Mammary epithelial cell (primary cell): ENCODE measurements at regions of chr12 and their contacts with region 1.

Region 1: DNA sequence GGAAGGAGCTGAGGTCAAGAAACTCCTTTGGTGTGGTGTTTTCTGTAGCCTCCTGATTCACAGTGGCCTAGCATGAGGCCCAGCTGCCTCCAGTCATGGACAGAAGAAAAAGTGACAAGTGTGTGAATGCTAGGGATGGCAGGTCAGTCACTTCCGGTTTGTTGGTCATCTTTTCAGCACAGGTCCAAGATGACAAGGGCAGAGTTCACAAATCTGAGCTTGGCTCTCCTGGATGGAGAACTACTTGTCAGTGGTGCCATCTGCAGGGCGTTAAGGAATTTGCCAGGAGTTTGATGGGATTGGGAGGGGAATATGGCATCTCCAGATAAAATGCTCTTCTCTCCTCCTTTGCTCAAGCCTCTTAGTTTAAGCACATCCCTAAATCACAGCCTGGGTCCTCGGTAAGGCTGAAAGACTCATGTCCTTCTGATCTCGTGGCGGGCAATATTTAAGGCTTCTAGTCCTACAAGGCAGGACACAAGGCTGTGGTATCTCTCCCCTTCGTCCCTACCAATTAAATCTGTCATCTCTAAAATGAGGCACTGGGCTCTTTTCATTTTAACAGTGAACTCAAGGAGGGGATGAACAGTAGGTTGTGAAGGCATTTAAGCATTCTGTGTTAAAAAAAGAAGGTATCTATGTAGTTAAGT is 10.0 kb downstream of the TUBA1B start:
- DNase-seq: peak; percentile 41
- H3K4me3 ChIP-seq: no peak overlapping the region
- H3K27ac ChIP-seq: no peak overlapping the region
- H3K4me1 ChIP-seq: no peaks in the 10 kb centered on the region
- H3K27me3 ChIP-seq: no peaks in the 10 kb centered on the region
- CTCF ChIP-seq: peak; percentile 75 to 78

Region 2: DNA sequence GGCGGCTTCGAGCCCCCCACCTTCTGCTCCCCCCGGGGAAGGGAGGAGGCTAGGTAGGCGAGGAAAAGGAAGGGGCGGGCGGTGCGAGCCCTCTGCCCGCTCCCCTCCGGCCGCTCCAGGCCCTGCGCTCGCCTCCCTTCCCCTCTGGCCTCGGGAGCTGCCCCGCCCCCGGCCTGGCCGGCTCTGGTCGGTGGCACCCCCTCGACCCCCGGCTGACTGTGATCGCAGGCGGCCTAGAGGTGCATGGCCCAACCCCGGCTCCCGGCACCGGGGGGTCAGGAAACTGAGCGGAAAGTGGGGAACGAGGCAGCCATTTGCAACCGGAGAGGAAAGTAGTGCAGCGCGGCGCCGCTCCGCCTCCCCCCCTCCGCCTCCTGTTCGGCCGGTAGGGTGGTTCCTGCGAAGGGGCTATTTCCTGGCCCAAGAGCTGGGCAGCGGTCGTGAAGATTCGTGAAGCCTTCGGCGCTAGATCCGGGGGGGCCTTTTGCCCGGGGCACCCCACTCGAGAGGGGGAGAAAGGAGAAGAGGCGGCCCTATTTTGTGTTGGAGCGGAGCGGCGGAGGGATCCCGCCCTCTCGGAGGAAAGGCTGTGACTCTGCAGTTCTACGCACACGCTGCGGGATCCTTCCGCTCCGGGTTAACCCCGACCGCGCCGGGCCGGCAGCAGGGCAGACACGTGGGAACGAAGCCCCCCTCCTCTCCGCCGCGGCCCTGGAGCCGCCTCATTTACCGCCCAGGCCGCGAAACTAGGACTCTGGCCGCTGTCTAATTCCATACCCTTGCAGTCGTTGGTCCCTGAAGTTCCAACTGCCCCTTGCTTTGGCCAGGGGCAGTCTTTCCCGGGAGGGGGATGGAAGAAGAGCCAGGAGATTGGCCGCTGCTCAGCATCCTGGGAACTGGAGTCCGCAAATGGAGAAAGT is 60.7 kb before region 1 on chr12 and contains the start of gene KMT2D:
- CTCF ChIA-PET with region 1: interaction called, 11 read pairs
- dilution Hi-C with region 1: loop called (anchors 5 kb)
- in situ Hi-C with region 1: loop called (anchors 5 kb)
- intact Hi-C with region 1: loop called (anchors 1 kb)
- DNase-seq: peak; percentile 93
- H3K4me3 ChIP-seq: peak within 1 kb of the TSS; percentile 87 to 93 (median 89)
- H3K27ac ChIP-seq: peak within 1 kb of the TSS; percentile 82
- H3K4me1 ChIP-seq: peaks cover 24% of the 10 kb centered on the region
- H3K27me3 ChIP-seq: no peaks in the 10 kb centered on the region
- CTCF ChIP-seq: peak in 1 of 2 donors; percentile 30
- total RNA-seq, gene KMT2D: 30.7 to 78.0 TPM

Region 3: DNA sequence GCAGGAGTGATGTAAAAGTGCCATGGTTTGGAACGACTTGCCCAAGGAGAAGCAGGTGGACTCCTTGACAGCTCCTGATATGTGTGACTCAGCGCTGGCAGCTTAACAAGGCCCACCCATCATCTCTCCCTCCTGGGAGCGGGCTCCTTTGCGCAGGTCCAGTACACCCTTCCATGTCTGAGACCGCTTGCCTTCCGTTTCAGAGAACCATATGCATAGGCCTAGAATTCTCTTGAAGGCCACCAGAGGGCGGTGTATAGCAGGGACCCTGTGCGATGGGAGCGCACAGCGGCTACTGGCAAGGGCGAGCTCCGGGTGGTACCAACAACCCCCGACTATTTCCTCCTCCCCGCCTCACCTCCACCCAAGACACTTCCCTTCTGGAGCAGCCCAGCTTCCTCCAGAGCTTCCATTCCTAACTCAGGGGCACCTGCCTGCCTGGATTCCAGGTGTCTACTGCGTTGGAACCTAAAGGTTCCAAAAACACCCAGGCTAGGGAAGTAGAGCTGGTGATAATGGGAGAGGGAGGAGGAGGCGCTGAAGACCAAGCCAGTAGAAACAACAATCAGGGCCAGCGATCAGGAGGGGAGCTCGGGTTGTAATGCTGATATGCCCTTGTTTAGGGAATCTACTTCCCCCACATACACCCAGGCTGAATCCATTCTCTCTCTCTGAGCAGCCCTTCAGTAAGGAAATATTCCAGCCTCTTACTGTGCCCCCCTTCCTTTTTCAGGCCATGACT is 32.8 kb before region 1 on chr12:
- CTCF ChIA-PET with region 1: interaction called, 21 read pairs
- dilution Hi-C with region 1: no loop called
- in situ Hi-C with region 1: no loop called
- intact Hi-C with region 1: loop called (anchors 1 kb)
- DNase-seq: peak; percentile 90
- H3K4me3 ChIP-seq: no peak overlapping the region
- H3K27ac ChIP-seq: no peak overlapping the region
- H3K4me1 ChIP-seq: peaks cover 26% of the 10 kb centered on the region
- H3K27me3 ChIP-seq: peaks cover 27% of the 10 kb centered on the region
- CTCF ChIP-seq: peak; percentile 88 to 90

Region 4: DNA sequence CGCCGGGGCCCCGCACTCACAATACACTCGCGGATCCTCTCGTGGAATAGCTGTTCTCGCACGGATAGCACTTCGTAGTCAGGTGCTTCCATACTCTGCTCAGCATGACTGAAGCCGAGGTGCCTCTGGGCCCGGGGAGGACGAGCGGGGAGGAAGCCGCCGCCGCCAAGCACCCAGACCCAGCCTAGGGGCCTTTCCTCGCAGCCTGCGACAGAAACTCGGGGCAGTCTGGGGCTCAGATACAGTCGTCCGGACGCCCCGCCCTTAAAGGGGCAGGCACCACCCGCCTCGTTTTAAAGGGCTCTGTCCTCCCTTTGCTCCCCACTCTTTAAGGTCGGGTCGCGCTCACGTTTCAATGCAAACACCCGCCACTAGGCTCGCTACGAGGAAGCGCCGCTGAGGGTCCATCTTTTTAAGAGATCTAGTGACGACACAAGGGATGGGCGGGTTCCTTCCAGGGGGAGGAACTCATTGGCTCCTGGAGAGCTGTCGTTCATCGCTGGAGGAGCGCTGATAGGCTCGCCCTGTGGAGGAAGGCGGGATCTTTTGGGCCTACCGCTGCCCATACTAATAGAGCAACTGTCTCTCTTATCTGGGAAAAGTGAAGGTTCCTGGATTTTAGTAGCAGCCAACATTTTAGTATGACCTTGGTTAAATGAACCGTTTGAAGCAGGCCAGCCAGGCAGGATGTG is 10.6 kb before region 1 on chr12 and contains the start of gene LMBR1L:
- CTCF ChIA-PET with region 1: no interaction called
- dilution Hi-C with region 1: no loop called
- in situ Hi-C with region 1: no loop called
- intact Hi-C with region 1: loop called (anchors 1 kb)
- DNase-seq: peak; percentile 97
- H3K4me3 ChIP-seq: peak within 1 kb of the TSS; percentile 81 to 98 (median 91)
- H3K27ac ChIP-seq: peak within 1 kb of the TSS; percentile 47
- H3K4me1 ChIP-seq: peaks cover 13% of the 10 kb centered on the region
- H3K27me3 ChIP-seq: no peaks in the 10 kb centered on the region
- CTCF ChIP-seq: peak; percentile 36 to 51
- total RNA-seq, gene LMBR1L: 22.8 to 24.2 TPM

Region 5: DNA sequence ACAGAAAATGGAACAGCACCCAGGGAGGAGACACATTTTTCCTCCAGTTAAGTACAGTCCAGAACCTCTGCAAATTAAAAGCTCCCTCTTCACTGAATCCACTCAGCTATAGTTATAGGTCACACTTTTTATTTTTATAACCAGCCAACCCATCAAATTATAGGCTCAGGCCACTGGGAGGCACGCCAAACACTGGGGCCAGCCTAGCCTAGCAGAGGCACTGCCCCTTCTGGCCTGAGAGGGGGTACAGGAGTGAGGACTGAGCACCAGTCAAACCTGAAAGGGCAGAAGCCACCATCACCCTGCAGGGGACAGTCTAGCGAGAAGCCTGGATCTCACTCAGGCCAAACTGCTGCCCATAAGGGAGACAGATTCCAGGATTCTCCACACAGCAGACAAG is 566.8 kb after region 1 on chr12:
- CTCF ChIA-PET with region 1: no interaction called
- dilution Hi-C with region 1: no loop called
- in situ Hi-C with region 1: no loop called
- intact Hi-C with region 1: no loop called
- DNase-seq: no peak
- H3K4me3 ChIP-seq: no peak overlapping the region
- H3K27ac ChIP-seq: no peak overlapping the region
- H3K4me1 ChIP-seq: no peaks in the 10 kb centered on the region
- H3K27me3 ChIP-seq: no peaks in the 10 kb centered on the region
- CTCF ChIP-seq: no peak

Region 6: GRCh38 chr12:49903695-49904423 is 782.7 kb after region 1 on chr12 and contains the start of gene FAIM2:
- CTCF ChIA-PET with region 1: interaction called, 11 read pairs
- dilution Hi-C with region 1: no loop called
- in situ Hi-C with region 1: no loop called
- intact Hi-C with region 1: no loop called
- DNase-seq: no peak
- H3K4me3 ChIP-seq: no peak within 1 kb of the TSS
- H3K27ac ChIP-seq: no peak within 1 kb of the TSS
- H3K4me1 ChIP-seq: peaks cover 3% of the 10 kb centered on the region
- H3K27me3 ChIP-seq: no peaks in the 10 kb centered on the region
- CTCF ChIP-seq: no peak
- total RNA-seq, gene FAIM2: not detected